ENCODE measurements at regions of chr5 and their contacts with region 1.

Region 1: GRCh38 chr5:44536650-44537260 is 147.5 kb upstream of the FGF10 start:
- DNase-seq: peak; percentile 42 to 70
- H3K4me3 ChIP-seq: no peak overlapping the region
- H3K4me3 Mint-ChIP-seq: no peak overlapping the region
- H3K27ac Mint-ChIP-seq: no peak overlapping the region
- H3K4me1 ChIP-seq: no peaks in the 10 kb centered on the region
- H3K4me1 Mint-ChIP-seq: no peaks in the 10 kb centered on the region
- H3K27me3 ChIP-seq: no peaks in the 10 kb centered on the region
- H3K27me3 Mint-ChIP-seq: peaks cover 3% of the 10 kb centered on the region
- CTCF ChIP-seq: peak; percentile 65 to 77

Region 2: DNA sequence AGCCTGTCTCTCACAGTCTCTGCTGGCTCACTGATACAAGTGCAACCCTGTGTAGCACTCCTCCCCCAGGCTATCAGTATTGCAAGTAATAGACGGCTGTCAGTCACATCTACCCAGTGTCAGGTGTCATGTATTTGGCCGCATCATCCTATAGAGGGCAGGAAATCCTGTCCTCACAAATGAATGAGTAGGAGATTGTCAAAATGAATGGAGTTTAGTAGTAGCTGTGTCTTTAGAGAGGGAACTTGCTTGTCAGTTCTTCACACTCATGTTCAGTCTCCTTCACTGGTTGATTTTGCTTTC is 101.8 kb after region 1 on chr5:
- CTCF ChIA-PET with region 1: no interaction called
- POLR2A ChIA-PET with region 1: no interaction called
- intact Hi-C with region 1: loop called (anchors 1 kb)
- DNase-seq: peak; percentile 25 to 32
- H3K4me3 ChIP-seq: no peak overlapping the region
- H3K4me3 Mint-ChIP-seq: no peak overlapping the region
- H3K27ac Mint-ChIP-seq: no peak overlapping the region
- H3K4me1 ChIP-seq: no peaks in the 10 kb centered on the region
- H3K4me1 Mint-ChIP-seq: no peaks in the 10 kb centered on the region
- H3K27me3 ChIP-seq: no peaks in the 10 kb centered on the region
- H3K27me3 Mint-ChIP-seq: no peaks in the 10 kb centered on the region
- CTCF ChIP-seq: no peak

Region 3: GRCh38 chr5:44691812-44692211 is 155.1 kb after region 1 on chr5:
- CTCF ChIA-PET with region 1: no interaction called
- POLR2A ChIA-PET with region 1: no interaction called
- intact Hi-C with region 1: loop called (anchors 5 kb)
- DNase-seq: peak in 1 of 2 experiments; percentile 47
- H3K4me3 ChIP-seq: no peak overlapping the region
- H3K4me3 Mint-ChIP-seq: no peak overlapping the region
- H3K27ac Mint-ChIP-seq: peak overlapping the region; percentile 10
- H3K4me1 ChIP-seq: peaks cover 14% of the 10 kb centered on the region
- H3K4me1 Mint-ChIP-seq: no peaks in the 10 kb centered on the region
- H3K27me3 ChIP-seq: no peaks in the 10 kb centered on the region
- H3K27me3 Mint-ChIP-seq: no peaks in the 10 kb centered on the region
- CTCF ChIP-seq: no peak

Region 4: GRCh38 chr5:44740659-44741058 is 203.9 kb after region 1 on chr5:
- CTCF ChIA-PET with region 1: no interaction called
- POLR2A ChIA-PET with region 1: no interaction called
- intact Hi-C with region 1: loop called (anchors 1 kb)
- DNase-seq: peak in 1 of 2 experiments; percentile 6
- H3K4me3 ChIP-seq: no peak overlapping the region
- H3K4me3 Mint-ChIP-seq: no peak overlapping the region
- H3K27ac Mint-ChIP-seq: no peak overlapping the region
- H3K4me1 ChIP-seq: no peaks in the 10 kb centered on the region
- H3K4me1 Mint-ChIP-seq: no peaks in the 10 kb centered on the region
- H3K27me3 ChIP-seq: no peaks in the 10 kb centered on the region
- H3K27me3 Mint-ChIP-seq: peaks cover 3% of the 10 kb centered on the region
- CTCF ChIP-seq: peak in 1 of 2 experiments; percentile 35

Region 5: DNA sequence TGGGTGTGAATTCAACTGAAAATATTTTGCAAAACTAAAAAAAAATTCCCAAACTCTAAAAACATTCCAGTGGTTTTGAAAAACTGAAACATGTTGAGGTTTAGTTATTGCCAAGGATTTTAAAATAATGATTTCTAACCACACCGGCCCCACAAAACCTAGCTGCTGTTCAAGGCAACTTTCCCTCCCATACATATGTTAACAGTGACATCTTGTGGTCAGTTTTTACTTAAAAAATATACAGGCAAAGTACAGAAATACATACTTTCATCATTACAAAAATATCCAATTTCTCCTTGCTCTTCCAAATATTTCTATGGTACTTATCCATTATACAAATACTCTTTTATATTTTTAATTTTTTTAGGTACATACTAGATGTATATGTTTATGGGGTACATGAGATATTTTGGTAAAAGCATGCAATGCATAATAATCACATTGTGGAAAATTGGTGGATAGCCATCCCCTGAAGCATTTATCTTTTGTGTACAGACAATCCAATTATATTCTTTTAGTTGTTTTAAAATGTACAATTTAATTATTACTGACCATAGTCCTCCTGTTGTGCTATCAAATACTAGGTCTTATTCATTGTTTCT is 237.6 kb after region 1 on chr5:
- CTCF ChIA-PET with region 1: interaction called, 3 read pairs
- POLR2A ChIA-PET with region 1: no interaction called
- intact Hi-C with region 1: loop called (anchors 1 kb)
- DNase-seq: peak in 1 of 2 experiments; percentile 37
- H3K4me3 ChIP-seq: no peak overlapping the region
- H3K4me3 Mint-ChIP-seq: no peak overlapping the region
- H3K27ac Mint-ChIP-seq: no peak overlapping the region
- H3K4me1 ChIP-seq: no peaks in the 10 kb centered on the region
- H3K4me1 Mint-ChIP-seq: no peaks in the 10 kb centered on the region
- H3K27me3 ChIP-seq: no peaks in the 10 kb centered on the region
- H3K27me3 Mint-ChIP-seq: no peaks in the 10 kb centered on the region
- CTCF ChIP-seq: peak; percentile 49 to 69